OCI-LY7 (cell line): ENCODE measurements at regions of chr1 and their contacts with region 1.

Region 1: DNA sequence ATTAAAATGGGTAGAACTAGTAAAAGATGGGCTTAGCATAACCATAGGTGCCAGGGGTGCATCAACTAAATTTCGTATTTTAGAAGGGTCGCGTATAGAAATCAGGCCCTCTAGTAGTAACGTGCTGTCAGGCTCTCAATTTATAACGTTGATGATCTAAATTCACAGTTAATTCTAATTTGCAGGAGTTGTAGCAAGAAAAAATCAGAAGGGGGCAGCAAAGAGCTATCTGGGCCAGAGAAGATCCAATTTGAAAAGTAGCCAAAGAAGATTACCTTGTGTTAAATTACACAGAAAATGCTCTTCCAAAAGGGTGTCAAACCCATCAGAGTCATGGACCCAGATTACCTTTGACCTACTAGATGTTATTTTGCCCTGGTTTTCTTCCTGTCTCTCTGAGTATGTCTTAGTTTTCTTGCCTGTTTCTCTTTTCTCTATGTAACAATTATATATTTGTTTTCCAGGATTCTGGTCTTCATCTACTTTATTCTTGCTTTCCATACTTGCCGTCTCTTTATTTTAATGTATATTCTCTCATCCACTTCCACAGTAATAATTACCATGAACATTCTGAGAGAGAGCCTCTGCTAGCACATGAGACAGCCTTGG is 1030.9 kb downstream of the AMY1C start:
- DNase-seq: peak; percentile 51
- H3K4me3 ChIP-seq: no peak overlapping the region
- H3K27ac ChIP-seq: no peak overlapping the region
- H3K4me1 ChIP-seq: no peaks in the 10 kb centered on the region
- CTCF ChIP-seq: peak; percentile 89

Region 2: DNA sequence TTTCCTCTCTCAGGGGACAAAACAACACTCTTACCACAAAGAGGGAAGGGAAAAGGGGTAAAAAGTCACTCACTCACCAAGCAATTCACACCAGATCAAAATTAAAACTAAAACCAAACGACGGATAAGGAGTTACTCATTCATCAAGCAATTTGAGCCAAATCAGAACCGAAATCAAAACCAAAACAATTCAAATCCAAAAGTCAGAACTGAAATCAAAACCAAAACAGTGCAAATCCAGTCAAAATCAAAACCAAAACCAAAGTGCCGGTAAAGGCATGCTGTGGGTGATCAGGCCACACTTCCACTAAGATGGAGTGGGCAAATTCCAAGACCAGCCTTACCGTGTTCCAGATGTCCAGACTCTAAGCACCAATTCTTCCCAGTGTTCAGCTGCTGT is 313.0 kb before region 1 on chr1:
- CTCF ChIA-PET with region 1: no interaction called
- POLR2A ChIA-PET with region 1: no interaction called
- intact Hi-C with region 1: no loop called
- DNase-seq: no peak
- H3K4me3 ChIP-seq: no peak overlapping the region
- H3K27ac ChIP-seq: no peak overlapping the region
- H3K4me1 ChIP-seq: no peaks in the 10 kb centered on the region
- CTCF ChIP-seq: no peak

Region 3: GRCh38 chr1:105793536-105794146 is 1013.1 kb after region 1 on chr1:
- CTCF ChIA-PET with region 1: no interaction called
- POLR2A ChIA-PET with region 1: no interaction called
- intact Hi-C with region 1: loop called (anchors 2 kb)
- DNase-seq: peak; percentile 37
- H3K4me3 ChIP-seq: no peak overlapping the region
- H3K27ac ChIP-seq: no peak overlapping the region
- H3K4me1 ChIP-seq: no peaks in the 10 kb centered on the region
- CTCF ChIP-seq: peak; percentile 87